Ascending aorta (tissue), 2 donors: ENCODE measurements at regions of chr6 and their contacts with region 1.

Region 1: DNA sequence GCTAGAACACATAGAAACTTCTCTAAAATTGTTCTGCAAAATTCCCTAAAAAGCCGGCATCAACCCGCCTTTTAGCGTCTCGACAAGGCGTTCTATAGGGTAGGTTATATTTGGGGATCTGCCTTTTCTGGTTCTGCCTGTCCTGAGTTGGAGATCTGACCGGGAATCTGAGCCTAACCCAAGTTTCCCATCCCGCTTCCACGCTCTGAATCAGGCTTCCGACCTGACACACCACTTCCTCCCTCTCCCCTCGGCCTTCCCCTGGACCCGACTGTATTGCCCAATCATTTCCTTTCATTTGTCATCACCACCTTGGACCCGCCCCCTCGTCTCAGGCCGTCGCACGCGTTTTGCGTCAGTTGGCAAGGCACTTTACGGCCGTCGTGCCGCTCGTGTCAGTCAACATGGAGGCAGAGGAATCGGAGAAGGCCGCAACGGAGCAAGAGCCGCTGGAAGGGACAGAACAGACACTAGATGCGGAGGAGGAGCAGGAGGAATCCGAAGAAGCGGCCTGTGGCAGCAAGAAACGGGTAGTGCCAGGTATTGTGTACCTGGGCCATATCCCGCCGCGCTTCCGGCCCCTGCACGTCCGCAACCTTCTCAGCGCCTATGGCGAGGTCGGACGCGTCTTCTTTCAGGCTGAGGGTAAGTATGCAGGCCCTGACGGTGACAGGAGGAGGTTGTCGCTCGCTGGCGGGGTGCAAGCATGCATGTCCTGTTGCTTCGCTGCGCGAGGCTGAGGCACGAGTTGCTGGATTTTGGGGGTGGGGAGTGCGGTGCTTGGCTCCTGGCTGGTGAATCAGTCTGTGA is at the start of gene ABT1:
- DNase-seq: peak; percentile 92 to 99
- H3K4me3 ChIP-seq: peak within 1 kb of the TSS; percentile 72 to 91
- H3K27ac ChIP-seq: peak within 1 kb of the TSS; percentile 86 to 91
- H3K4me1 ChIP-seq: peaks cover 4 to 6% of the 10 kb centered on the region in 2 donors
- H3K27me3 ChIP-seq: peaks cover 18% of the 10 kb centered on the region
- CTCF ChIP-seq: no peak
- total RNA-seq, gene ABT1: 20.1 TPM

Region 2: DNA sequence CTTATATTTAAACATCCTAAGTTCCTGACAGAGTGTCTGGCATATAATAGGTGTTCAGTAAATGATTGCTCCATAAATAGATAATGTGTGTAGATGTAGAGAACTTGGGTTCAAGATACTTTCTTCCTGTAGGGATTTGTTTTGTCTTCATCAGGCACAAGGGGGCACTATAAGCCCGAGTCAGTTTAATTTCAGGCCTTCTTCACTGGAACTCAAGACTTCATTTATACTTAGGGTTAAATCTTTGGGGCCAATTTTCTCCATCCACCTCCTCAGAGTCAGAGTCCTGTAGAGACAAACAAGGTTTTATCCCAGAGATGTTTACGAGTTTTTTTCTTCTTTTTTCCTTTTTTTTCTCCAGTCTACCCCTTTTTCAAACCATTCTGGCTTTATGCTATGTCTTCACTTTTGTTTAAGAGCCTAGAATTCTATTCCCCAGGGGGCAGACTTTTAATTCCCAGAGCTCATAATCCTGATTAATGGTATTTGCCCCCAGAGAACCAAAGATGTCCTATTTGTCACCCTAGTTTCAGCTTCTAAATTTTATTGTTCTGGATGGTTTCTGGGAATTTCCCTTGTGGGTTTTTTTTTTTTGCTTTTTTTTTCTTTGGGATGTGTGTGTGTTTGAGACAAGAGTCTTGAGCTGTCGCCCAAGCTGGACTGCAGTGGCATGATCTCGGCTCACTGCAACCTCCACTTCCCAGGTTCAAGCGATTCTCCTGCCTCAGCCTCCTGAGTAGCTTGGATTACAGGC is 421.2 kb before region 1 on chr6:
- intact Hi-C with region 1: loop called (anchors 5 kb)
- DNase-seq: no peak
- H3K4me3 ChIP-seq: no peak overlapping the region
- H3K27ac ChIP-seq: no peak overlapping the region
- H3K4me1 ChIP-seq: peaks cover 0 to 2% of the 10 kb centered on the region in 2 donors
- H3K27me3 ChIP-seq: no peaks in the 10 kb centered on the region
- CTCF ChIP-seq: peak; percentile 35 to 78 (median 49)

Region 3: GRCh38 chr6:26411751-26412150 is 185.0 kb before region 1 on chr6:
- intact Hi-C with region 1: no loop called
- DNase-seq: no peak
- H3K4me3 ChIP-seq: no peak overlapping the region
- H3K27ac ChIP-seq: no peak overlapping the region
- H3K4me1 ChIP-seq: no peaks in the 10 kb centered on the region
- H3K27me3 ChIP-seq: no peaks in the 10 kb centered on the region
- CTCF ChIP-seq: no peak

Region 4: DNA sequence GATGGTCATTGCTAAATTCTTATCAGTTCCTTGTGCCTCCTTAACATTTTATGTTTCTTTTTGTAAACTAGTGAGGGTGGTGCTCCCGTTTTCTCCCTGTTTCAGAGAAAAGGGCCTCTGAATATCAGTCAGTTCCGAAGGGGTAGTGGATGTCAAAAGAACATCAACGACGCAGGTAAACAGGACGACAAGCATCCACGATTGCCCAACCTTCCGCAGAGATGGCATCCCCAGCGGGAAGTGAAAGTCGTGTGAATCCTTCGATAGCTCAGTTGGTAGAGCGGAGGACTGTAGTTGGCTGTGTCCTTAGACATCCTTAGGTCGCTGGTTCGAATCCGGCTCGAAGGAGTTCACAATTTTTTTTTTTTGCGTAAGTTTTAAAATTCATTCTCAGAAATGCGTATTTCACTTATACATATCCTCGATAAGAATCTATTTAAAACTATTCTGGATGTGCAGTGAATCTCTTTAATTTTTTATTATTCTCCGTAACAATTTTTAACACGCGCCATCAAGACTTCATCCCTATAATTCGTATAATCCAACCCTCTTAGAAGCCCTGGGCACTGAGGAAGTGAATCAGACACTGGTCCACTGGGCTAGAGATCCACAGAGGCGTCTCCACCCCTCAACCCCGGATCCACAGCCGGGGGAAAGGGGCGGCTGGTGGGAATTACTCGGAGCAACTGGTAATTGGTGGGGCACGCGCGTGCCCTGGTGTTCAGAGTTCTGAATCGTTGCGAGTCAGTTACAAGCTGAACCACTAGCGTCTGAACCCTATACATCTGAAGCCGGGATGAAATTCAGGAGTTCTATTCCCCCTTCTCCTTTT is 28.0 kb before region 1 on chr6:
- intact Hi-C with region 1: loop called (anchors 1 kb)
- DNase-seq: peak; percentile 80 to 97
- H3K4me3 ChIP-seq: peak overlapping the region; percentile 61 to 73
- H3K27ac ChIP-seq: peak overlapping the region; percentile 62 to 71
- H3K4me1 ChIP-seq: peaks cover 0 to 4% of the 10 kb centered on the region in 2 donors
- H3K27me3 ChIP-seq: no peaks in the 10 kb centered on the region
- CTCF ChIP-seq: peak in 1 of 3 experiments; percentile 33

Region 5: DNA sequence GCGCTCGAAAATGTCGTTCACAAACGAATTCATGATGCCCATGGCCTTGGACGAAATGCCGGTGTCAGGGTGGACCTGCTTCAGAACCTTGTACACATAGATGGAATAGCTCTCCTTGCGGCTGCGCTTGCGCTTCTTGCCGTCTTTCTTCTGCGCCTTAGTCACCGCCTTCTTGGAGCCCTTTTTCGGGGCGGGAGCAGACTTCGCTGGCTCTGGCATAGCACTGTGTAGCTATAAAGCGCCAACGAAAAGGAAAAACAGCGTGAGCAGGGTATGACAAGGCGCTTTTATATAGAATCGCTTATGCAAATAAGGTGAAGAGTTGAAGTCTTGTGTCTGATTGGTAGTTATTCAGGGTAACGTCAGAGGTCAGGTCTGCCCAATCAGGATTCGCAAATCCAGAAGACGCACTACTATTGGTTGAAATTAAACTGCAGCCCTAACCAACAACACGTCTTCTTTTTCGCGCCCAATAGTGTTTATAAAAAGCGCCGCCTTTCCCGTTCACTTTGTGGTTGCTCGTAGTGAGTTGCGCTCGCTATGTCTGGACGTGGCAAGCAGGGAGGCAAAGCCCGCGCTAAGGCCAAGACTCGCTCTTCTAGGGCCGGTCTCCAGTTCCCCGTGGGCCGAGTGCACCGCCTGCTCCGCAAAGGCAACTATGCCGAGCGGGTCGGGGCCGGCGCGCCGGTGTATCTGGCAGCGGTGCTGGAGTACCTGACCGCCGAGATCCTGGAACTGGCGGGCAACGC is 535.9 kb after region 1 on chr6:
- intact Hi-C with region 1: loop called (anchors 5 kb)
- DNase-seq: peak; percentile 82 to 97
- H3K4me3 ChIP-seq: peak overlapping the region; percentile 69 to 75
- H3K27ac ChIP-seq: peak overlapping the region; percentile 88 to 89
- H3K4me1 ChIP-seq: peaks cover 4 to 10% of the 10 kb centered on the region in 2 donors
- H3K27me3 ChIP-seq: no peaks in the 10 kb centered on the region
- CTCF ChIP-seq: no peak

Region 6: DNA sequence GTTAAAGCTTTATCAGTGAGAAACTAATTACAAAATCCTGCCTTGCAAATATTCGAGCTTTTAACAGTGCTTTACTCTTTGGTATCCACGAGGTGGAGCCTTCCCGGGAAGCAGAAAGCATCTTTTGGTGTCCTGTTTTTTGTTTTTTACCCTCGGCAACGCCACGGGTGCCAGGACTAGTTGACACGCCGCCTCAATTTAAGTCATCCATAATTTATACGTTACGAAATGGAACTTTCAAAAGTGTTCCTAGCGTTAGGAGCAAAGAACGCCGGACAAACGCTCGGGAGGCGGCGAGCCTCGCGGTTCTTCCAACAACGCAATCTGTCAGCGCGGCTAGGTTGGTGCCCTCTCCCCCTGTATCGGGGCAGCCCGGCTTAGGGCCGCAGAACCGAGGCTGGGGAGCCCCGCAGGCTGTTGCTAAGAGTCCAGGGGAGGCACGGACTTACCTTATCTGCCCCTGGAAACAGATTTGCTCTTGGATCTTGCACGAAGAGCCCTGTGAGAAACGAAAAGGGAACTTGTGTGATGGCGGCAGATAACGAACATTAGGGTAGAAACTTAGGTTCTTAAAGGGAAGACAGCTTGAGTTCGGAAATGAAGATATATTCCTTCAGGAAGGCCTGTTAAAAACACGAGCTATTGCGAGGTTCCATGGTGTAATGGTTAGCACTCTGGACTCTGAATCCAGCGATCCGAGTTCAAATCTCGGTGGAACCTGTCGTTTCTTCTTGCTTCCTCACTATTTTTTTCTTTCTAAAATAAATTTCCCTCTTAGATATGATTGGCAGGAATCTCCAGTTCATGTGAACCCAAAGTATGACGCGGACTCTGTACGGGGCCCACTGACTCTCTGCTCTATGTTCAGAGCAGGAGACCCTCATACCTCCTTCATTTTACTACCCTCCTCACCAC is 922.4 kb after region 1 on chr6:
- intact Hi-C with region 1: loop called (anchors 10 kb)
- DNase-seq: peak in 1 of 2 donors; percentile 77
- H3K4me3 ChIP-seq: peak overlapping the region; percentile 76 to 86
- H3K27ac ChIP-seq: peak overlapping the region; percentile 90 to 94
- H3K4me1 ChIP-seq: peaks cover 0 to 8% of the 10 kb centered on the region in 2 donors
- H3K27me3 ChIP-seq: no peaks in the 10 kb centered on the region
- CTCF ChIP-seq: peak; percentile 31 to 78 (median 71)

Region 7: DNA sequence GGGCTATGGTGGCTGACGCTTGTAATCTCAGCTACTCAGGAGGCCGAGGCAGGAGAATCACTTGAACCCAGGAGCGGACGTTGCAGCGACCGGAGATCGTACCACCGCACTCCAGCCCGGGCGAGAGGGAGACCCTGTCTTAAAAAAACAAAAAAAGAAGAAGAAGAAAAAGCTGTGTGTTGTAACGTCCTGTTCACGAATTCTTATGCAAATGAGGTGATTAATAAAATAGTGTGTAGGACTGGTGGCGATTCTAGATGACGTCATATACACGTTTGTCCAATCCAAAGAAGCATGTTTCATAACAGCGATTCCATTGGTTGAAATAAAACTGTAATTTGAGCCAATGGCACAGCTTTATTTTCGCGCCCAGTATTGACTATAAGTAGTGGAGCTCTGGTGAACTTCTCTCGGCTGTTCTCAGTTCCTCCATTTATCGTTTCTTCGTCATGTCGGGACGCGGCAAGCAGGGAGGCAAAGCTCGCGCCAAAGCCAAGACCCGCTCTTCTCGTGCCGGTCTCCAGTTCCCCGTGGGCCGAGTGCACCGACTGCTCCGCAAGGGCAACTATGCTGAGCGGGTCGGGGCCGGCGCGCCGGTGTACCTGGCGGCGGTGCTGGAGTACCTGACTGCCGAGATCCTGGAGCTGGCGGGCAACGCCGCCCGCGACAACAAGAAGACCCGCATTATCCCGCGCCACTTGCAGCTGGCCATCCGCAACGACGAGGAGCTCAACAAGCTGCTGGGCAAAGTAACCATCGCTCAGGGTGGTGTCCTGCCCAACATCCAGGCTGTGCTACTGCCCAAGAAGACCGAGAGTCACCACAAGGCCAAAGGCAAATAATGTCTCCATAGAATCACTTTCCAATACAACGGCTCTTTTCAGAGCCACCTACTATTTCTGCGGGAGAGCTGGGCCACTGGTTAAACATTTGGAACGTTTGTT is 1268.4 kb after region 1 on chr6:
- intact Hi-C with region 1: loop called (anchors 10 kb)
- DNase-seq: peak in 1 of 2 donors; percentile 78
- H3K4me3 ChIP-seq: peak overlapping the region; percentile 50 to 73
- H3K27ac ChIP-seq: peak overlapping the region; percentile 58 to 61
- H3K4me1 ChIP-seq: peaks cover 6 to 14% of the 10 kb centered on the region in 2 donors
- H3K27me3 ChIP-seq: no peaks in the 10 kb centered on the region
- CTCF ChIP-seq: no peak